Activated B cell treated with CpG ODN at 0.5 μM for 24 hours (primary cell): ENCODE measurements at regions of chr11 and their contacts with region 1.

Region 1: GRCh38 chr11:83156150-83156995 is 558 bp upstream of the PCF11 start:
- DNase-seq: peak; percentile 82
- ATAC-seq: peak; percentile 88
- H3K4me3 Mint-ChIP-seq: peak overlapping the region; percentile 100
- H3K27ac Mint-ChIP-seq: peak overlapping the region; percentile 100
- H3K4me1 Mint-ChIP-seq: peaks cover 34% of the 10 kb centered on the region
- H3K27me3 Mint-ChIP-seq: no peaks in the 10 kb centered on the region
- CTCF ChIP-seq: no peak

Region 2: GRCh38 chr11:82900277-82901164 is 255.9 kb before region 1 on chr11 and contains the start of gene PRCP:
- CTCF ChIA-PET with region 1: interaction called, 5 read pairs
- POLR2A ChIA-PET with region 1: interaction called, 86 read pairs
- intact Hi-C with region 1: loop called (anchors 1 kb)
- DNase-seq: peak; percentile 78
- ATAC-seq: peak; percentile 75
- H3K4me3 Mint-ChIP-seq: peak within 1 kb of the TSS; percentile 100
- H3K27ac Mint-ChIP-seq: peak within 1 kb of the TSS; percentile 99
- H3K4me1 Mint-ChIP-seq: peaks cover 57% of the 10 kb centered on the region
- H3K27me3 Mint-ChIP-seq: no peaks in the 10 kb centered on the region
- CTCF ChIP-seq: no peak
- total RNA-seq, gene PRCP: 29.8 and 34.8 TPM in 2 replicates

Region 3: DNA sequence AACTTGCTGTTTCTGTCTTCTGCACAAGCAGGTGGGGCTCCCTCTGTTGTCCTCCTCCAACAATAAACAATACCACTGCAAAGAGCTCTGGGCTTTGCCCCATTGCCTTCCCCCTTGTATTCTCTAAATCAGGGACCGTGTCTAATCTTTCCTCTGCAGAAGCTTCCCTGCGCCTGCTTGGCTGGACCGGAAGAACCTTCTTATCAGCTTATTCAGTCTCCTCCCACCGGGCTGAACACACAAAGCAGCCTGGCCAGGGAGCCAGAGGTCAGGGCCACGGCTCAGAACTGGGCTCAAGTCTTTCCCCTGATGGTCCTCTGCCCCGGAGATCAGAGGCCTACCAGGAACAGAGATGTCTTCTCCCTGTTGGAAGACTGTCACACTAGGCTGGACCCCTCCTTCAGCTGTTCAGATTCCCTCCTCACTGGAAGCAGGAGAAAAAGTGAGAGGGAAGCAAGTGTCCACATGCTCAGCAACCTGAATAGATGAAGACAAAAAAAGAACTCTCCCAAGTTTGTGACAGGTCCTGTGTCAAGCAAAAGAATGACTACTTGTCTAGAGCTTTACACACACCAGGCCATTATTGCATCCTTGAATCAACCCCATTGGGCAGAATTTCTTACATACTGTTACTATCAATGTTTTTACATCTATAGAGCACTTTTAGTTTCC is 148.3 kb before region 1 on chr11:
- CTCF ChIA-PET with region 1: no interaction called
- POLR2A ChIA-PET with region 1: interaction called, 12 read pairs
- intact Hi-C with region 1: no loop called
- DNase-seq: no peak
- ATAC-seq: peak; percentile 28
- H3K4me3 Mint-ChIP-seq: peak overlapping the region; percentile 36
- H3K27ac Mint-ChIP-seq: peak overlapping the region; percentile 82
- H3K4me1 Mint-ChIP-seq: peaks cover 77% of the 10 kb centered on the region
- H3K27me3 Mint-ChIP-seq: no peaks in the 10 kb centered on the region
- CTCF ChIP-seq: no peak

Region 4: DNA sequence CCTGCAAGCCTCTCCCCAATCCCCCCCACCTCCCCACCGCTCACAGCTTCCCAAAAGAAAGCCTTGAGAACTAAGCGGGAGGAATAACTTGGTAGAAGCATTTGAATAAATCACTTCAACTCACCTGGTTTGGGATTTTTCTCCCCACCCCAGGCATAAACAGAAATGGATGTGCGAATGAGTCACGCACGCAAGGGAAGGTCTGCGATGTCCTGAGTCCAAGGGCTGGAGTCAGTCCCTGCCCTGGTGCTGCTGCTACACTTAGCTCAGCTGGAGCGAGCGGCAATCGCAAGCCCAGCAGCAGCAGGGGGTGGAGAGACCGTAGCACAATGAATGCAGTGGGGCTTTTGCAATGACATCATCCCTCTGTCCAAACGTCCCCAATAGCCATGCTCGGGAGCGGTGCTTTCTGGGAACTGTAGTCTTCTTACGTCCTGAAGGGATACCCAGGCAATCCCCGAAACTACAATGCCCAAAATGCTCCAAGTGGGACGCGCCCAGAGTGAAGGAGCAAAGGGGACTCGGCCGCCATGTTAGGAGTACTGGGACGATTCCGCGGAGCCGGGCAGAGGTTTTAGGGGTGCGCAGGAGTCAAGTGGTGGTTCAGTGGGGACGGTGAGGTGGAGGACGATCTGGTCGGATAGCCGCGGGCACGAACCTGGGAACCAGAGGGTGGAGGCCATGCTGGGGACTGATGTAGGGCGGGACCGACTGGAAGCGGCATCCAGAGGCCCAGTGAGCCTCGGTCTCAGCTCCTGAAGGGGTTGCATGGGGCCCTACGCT is 84.6 kb before region 1 on chr11 and contains the start of gene RAB30:
- CTCF ChIA-PET with region 1: interaction called, 3 read pairs
- POLR2A ChIA-PET with region 1: interaction called, 129 read pairs
- intact Hi-C with region 1: loop called (anchors 1 kb)
- DNase-seq: peak; percentile 75
- ATAC-seq: peak; percentile 94
- H3K4me3 Mint-ChIP-seq: no peak within 1 kb of the TSS
- H3K27ac Mint-ChIP-seq: no peak within 1 kb of the TSS
- H3K4me1 Mint-ChIP-seq: peaks cover 66% of the 10 kb centered on the region
- H3K27me3 Mint-ChIP-seq: no peaks in the 10 kb centered on the region
- CTCF ChIP-seq: no peak
- total RNA-seq, gene RAB30: 160 and 173 TPM in 2 replicates

Region 5: DNA sequence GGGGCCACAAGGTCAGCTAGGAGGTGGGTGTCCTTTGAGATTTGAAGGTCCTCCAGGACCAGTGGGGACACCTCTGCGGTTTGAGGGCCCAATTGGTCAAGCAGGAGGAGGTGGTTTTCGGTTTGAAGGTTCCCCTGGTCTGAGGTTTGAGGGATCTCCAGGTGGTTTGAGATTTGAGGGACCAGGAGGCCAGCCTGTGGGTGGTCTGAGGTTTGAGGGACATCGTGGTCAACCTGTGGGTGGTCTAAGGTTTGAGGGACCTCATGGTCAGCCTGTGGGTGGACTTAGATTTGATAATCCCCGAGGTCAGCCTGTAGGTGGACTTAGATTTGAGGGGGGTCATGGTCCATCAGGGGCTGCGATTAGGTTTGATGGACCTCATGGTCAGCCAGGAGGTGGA is 12.4 kb after region 1 on chr11:
- CTCF ChIA-PET with region 1: no interaction called
- POLR2A ChIA-PET with region 1: interaction called, 10 read pairs
- intact Hi-C with region 1: loop called (anchors 2 kb)
- DNase-seq: no peak
- ATAC-seq: no peak
- H3K4me3 Mint-ChIP-seq: no peak overlapping the region
- H3K27ac Mint-ChIP-seq: no peak overlapping the region
- H3K4me1 Mint-ChIP-seq: peaks cover 72% of the 10 kb centered on the region
- H3K27me3 Mint-ChIP-seq: no peaks in the 10 kb centered on the region
- CTCF ChIP-seq: no peak

Region 6: DNA sequence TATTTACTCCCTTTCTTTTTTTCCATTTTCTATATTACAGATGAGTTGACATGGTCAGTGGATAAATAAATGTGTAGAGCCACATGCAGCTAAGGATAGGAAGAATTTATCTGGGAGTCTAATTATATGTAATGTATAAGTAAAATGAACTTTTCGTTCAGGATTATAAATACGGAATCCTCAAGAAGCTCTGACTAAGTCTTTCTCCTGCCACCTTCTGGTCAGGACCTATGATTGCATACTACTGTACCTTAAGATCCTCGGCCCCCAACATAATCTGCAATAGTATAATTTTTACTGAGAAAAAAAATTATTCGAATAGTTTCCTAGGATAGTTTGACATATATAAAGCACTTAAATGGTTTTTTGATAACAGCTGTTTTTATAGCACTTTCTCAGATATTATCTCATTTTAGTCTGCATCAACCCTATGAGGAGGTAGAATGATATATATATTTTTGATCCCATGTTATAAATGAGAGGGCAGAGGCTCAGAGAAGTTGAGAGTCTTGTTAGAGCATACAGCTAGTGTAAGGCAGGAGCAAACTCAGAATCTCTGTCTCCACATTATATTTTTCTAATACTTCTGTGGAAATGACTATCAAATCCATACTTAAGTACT is 93.7 kb after region 1 on chr11:
- CTCF ChIA-PET with region 1: interaction called, 10 read pairs
- POLR2A ChIA-PET with region 1: interaction called, 10 read pairs
- intact Hi-C with region 1: no loop called
- DNase-seq: no peak
- ATAC-seq: peak; percentile 75
- H3K4me3 Mint-ChIP-seq: no peak overlapping the region
- H3K27ac Mint-ChIP-seq: no peak overlapping the region
- H3K4me1 Mint-ChIP-seq: peaks cover 13% of the 10 kb centered on the region
- H3K27me3 Mint-ChIP-seq: no peaks in the 10 kb centered on the region
- CTCF ChIP-seq: peak; percentile 90